PC-9 (cell line): ENCODE measurements at regions of chr9 and their contacts with region 1.

Region 1: DNA sequence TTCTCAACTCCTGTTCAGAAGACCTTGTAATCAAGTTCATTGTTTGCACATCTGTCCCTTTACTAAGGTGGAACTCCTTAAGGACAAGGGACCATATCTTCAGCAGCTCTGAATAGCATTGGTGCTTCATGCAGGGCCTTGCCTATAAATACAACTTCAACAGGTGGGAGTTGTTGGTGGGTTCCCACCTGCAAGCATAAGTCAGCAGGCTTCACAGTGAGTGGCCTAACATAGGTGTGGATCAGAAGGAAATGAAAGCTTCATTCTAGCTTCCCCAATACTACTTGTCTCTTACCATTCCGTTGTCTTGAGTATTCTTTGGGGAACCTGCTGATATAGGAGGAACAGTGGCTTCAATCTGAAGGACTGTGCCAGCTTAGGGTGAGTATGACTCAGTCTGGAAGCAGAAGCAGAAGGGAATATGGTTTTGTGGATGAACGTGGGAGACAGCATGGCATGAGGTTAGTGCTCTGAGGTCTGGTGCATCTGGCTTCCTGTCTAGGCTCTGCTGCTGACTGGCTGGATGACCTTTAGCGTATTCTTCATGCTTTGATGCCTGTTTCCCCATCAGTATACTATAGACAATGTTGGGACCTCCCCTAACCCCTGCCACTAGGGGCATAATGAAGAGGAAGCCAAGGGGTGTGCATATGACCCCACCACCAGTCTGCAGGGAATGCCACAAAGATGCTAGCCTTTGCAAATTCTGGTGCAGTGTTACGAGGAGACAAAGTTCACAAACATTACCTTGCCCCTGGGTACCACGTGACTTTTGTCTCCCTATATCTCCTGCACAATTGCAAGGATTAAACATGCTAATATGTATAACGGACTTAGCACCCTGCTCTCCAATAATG is 192.3 kb downstream of the PALM2AKAP2 start:
- DNase-seq: no peak
- H3K4me3 ChIP-seq: no peak overlapping the region
- H3K27ac ChIP-seq: no peak overlapping the region
- H3K4me1 ChIP-seq: no peaks in the 10 kb centered on the region
- H3K27me3 ChIP-seq: no peaks in the 10 kb centered on the region
- CTCF ChIP-seq: no peak

Region 2: GRCh38 chr9:109986521-109986991 is 14.3 kb after region 1 on chr9:
- CTCF ChIA-PET with region 1: no interaction called
- POLR2A ChIA-PET with region 1: interaction called, 26 read pairs
- intact Hi-C with region 1: no loop called
- DNase-seq: peak in 1 of 2 experiments; percentile 74
- H3K4me3 ChIP-seq: no peak overlapping the region
- H3K27ac ChIP-seq: no peak overlapping the region
- H3K4me1 ChIP-seq: peaks cover 16% of the 10 kb centered on the region
- H3K27me3 ChIP-seq: no peaks in the 10 kb centered on the region
- CTCF ChIP-seq: no peak